ENCODE measurements at regions of chr5 and their contacts with region 1.

Region 1: GRCh38 chr5:64518809-64519208 is 13.0 kb downstream of the RGS7BP start:
- DNase-seq: no peak
- ATAC-seq: no peak
- H3K4me3 ChIP-seq: no peak overlapping the region
- H3K27ac ChIP-seq: no peak overlapping the region
- H3K4me1 ChIP-seq: peaks cover 5% of the 10 kb centered on the region
- H3K27me3 ChIP-seq: no peaks in the 10 kb centered on the region
- CTCF ChIP-seq: no peak

Region 2: DNA sequence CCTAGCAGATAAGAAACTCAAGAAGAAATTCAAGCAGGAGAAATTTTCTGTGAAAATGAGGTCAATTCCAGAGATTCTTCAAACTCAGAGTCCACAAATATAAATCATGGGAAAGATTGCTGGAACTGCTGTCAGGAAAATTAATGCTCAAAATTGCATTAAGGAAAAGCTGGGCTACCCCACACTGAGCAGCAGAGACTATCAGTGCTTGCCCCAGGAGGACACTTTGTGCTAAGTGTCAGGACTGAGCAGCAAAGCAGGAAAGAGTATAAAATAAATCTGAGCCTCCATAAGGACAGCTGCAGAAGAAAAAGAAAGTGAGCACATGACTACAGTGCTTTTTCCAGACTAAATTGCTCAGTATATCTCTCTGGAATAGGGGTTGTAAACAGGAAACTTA is 68.6 kb after region 1 on chr5:
- intact Hi-C with region 1: loop called in 1 of 2 experiments (anchors 5 kb)
- DNase-seq: no peak
- ATAC-seq: no peak
- H3K4me3 ChIP-seq: no peak overlapping the region
- H3K27ac ChIP-seq: no peak overlapping the region
- H3K4me1 ChIP-seq: no peaks in the 10 kb centered on the region
- H3K27me3 ChIP-seq: no peaks in the 10 kb centered on the region
- CTCF ChIP-seq: no peak

Region 3: DNA sequence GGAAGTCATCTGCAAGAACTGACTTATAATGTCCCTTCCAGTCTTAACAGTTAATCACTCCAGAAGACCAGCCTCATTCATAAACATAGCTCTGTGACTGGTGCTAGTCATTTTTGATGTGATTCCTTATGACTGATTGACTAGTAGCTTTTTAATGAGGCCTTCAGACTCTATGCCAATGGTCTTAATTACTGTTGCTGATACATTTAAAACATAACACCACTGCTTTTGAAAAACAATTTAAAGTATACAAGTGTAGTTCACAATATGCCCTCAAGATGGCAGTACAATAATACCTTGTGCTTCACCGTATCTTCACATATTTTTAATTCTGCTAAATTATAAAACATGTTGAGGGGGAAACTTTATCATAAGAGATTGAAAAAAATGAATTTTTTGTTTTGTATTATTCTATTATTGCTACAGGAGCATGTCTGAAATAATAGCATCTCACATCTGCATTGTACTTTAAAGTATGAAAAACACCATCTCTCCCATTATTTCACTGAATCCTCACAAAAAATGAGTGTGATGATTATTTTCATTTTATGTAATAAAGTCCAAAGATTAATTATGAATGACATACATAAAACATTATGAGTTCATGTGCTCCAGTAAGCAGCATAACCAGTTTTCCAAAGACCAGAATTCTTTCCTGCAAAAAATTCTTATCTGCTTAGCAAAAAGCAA is 116.3 kb after region 1 on chr5:
- intact Hi-C with region 1: no loop called
- DNase-seq: no peak
- ATAC-seq: peak in 2 of 4 donors; percentile 49 to 59
- H3K4me3 ChIP-seq: no peak overlapping the region
- H3K27ac ChIP-seq: no peak overlapping the region
- H3K4me1 ChIP-seq: no peaks in the 10 kb centered on the region
- H3K27me3 ChIP-seq: peaks cover 0 to 3% (median 0%) of the 10 kb centered on the region in 3 donors
- CTCF ChIP-seq: peak; percentile 89

Measured in psoas muscle (tissue), 8 donors.